ENCODE measurements at regions of chr1 and their contacts with region 1.

Region 1: GRCh38 chr1:15820478-15820877 is 13.0 kb upstream of the UQCRHL start:
- DNase-seq: no peak
- H3K4me3 Mint-ChIP-seq: no peak overlapping the region
- H3K27ac Mint-ChIP-seq: no peak overlapping the region
- H3K4me1 Mint-ChIP-seq: peaks cover 9% of the 10 kb centered on the region
- H3K27me3 Mint-ChIP-seq: no peaks in the 10 kb centered on the region

Region 2: DNA sequence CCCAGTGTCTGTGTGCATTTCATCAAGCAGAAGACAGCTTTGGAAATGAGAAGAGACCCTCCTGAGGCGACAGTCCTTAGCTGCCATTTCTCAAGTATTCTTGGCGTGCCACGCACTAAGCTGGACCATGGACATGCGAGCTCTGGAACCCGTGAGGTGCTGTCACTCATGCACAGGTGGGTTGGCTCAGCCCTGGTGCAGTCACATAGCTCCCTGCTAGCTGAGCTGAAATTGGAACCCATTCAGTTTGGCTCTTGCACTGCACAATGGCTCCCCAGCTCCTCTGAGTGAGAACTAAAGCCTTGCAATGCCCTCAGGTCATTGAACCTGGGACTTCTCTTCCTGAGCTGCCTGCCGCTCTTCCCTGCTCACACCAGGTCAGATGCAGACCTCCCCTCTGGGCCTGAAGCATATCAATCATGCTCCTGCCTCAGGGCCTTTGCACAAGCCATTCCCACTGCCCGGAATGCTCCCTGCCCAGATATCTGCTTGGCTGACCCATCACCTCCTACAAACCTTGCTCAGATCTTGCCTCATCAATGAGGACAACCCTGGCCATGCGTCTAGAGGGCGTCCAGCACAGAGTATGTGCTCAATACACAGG is 177.3 kb after region 1 on chr1:
- intact Hi-C with region 1: loop called (anchors 2 kb)
- DNase-seq: no peak
- H3K4me3 Mint-ChIP-seq: no peak overlapping the region
- H3K27ac Mint-ChIP-seq: no peak overlapping the region
- H3K4me1 Mint-ChIP-seq: peaks cover 3% of the 10 kb centered on the region
- H3K27me3 Mint-ChIP-seq: peaks cover 5% of the 10 kb centered on the region

Measured in activated CD4-positive, alpha-beta T cell treated with anti-CD3 and anti-CD28 coated beads, Interleukin-2, amount 10 ng/mL, durations not matched to agents 24 days and 14 days (primary cell).